SK-N-SH (cell line): ENCODE measurements at regions of chr10 and their contacts with region 1.

Region 1: GRCh38 chr10:70363971-70364771 is 18.3 kb downstream of the LRRC20 start:
- DNase-seq: peak; percentile 88
- H3K4me3 ChIP-seq: peak overlapping the region in 1 of 2 experiments; percentile 14; a peak in 1 of 4 replicates
- H3K27ac ChIP-seq: peak overlapping the region; percentile 60 to 96
- H3K4me1 ChIP-seq: peaks cover 6 to 15% of the 10 kb centered on the region in 2 experiments; a peak in 3 of 4 replicates
- H3K27me3 ChIP-seq: no peaks in the 10 kb centered on the region
- CTCF ChIP-seq: peak; percentile 92
- EP300 ChIP-seq: peak; percentile 6 to 77; a peak in 2 of 4 replicates
- RAD21 ChIP-seq: peak; percentile 99

Region 2: GRCh38 chr10:69668721-69669120 is 695.5 kb before region 1 on chr10:
- CTCF ChIA-PET with region 1: no interaction called
- POLR2A ChIA-PET with region 1: no interaction called
- DNase-seq: no peak
- H3K4me3 ChIP-seq: no peak overlapping the region
- H3K27ac ChIP-seq: no peak overlapping the region
- H3K4me1 ChIP-seq: no peaks in the 10 kb centered on the region; a peak in 1 of 4 replicates
- H3K27me3 ChIP-seq: peaks cover 30% of the 10 kb centered on the region
- CTCF ChIP-seq: no peak
- EP300 ChIP-seq: no peak
- RAD21 ChIP-seq: no peak

Region 3: DNA sequence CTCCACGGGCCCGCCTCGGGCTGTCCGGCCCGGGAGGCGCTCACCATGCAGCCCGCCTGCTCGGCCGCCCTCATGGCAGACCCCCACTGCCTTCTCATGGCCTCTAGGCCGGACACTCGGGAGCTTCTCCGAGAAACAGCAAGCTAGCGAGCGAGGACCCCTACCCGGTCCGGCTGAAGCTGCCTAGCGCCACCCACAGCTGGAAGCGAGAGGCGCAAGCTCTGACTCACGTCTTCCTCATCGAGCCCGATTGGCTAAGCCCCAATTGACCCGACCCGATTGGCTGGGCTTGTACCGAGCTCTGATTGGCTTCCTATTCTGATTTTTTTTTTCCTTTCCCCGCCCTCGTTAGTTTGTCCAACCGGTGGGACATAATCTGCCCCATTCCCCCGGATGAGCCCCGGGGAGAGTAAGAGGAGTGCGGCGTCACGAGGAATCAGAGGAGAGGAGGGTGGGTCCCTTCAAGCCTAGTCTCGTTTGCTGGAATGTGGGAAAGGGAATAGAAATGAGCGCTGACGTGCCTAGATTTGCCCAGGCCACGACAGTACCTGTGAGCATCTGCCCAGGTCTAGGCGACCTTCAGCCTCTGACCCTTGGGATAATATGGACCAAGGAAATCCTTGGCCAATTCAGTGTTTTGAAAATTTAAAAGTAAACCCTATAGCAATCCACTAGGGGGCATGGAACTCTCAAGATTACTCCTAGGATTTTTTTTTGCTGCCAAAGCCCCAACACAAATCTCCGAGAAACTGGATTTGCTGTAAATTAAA is 217.5 kb before region 1 on chr10 and contains the start of gene TYSND1:
- CTCF ChIA-PET with region 1: interaction called, 28 read pairs
- POLR2A ChIA-PET with region 1: interaction called, 6 read pairs
- DNase-seq: peak; percentile 96
- H3K4me3 ChIP-seq: peak within 1 kb of the TSS; percentile 68 to 71
- H3K27ac ChIP-seq: peak within 1 kb of the TSS; percentile 91 to 92
- H3K4me1 ChIP-seq: peaks cover 5 to 27% of the 10 kb centered on the region in 2 experiments; a peak in 3 of 4 replicates
- H3K27me3 ChIP-seq: no peaks in the 10 kb centered on the region
- CTCF ChIP-seq: peak; percentile 60
- EP300 ChIP-seq: no peak; a peak in 1 of 4 replicates
- RAD21 ChIP-seq: peak; percentile 73
- polyA plus RNA-seq, gene TYSND1: 7.2 and 7.4 TPM in 2 replicates

Region 4: GRCh38 chr10:70227548-70228320 is 136.4 kb before region 1 on chr10:
- CTCF ChIA-PET with region 1: interaction called, 214 read pairs
- POLR2A ChIA-PET with region 1: interaction called, 26 read pairs
- DNase-seq: no peak
- H3K4me3 ChIP-seq: no peak overlapping the region
- H3K27ac ChIP-seq: no peak overlapping the region
- H3K4me1 ChIP-seq: peaks cover 0 to 4% of the 10 kb centered on the region in 2 experiments; a peak in 2 of 4 replicates
- H3K27me3 ChIP-seq: no peaks in the 10 kb centered on the region
- CTCF ChIP-seq: no peak
- EP300 ChIP-seq: no peak
- RAD21 ChIP-seq: no peak

Region 5: GRCh38 chr10:70272925-70273316 is 91.2 kb before region 1 on chr10:
- CTCF ChIA-PET with region 1: interaction called, 32 read pairs
- POLR2A ChIA-PET with region 1: interaction called, 5 read pairs
- DNase-seq: peak; percentile 49
- H3K4me3 ChIP-seq: peak overlapping the region in 1 of 2 experiments; percentile 21; a peak in 1 of 4 replicates
- H3K27ac ChIP-seq: no peak overlapping the region
- H3K4me1 ChIP-seq: peaks cover 0 to 2% of the 10 kb centered on the region in 2 experiments; a peak in 1 of 4 replicates
- H3K27me3 ChIP-seq: no peaks in the 10 kb centered on the region
- CTCF ChIP-seq: peak; percentile 64
- EP300 ChIP-seq: no peak
- RAD21 ChIP-seq: peak; percentile 55

Region 6: DNA sequence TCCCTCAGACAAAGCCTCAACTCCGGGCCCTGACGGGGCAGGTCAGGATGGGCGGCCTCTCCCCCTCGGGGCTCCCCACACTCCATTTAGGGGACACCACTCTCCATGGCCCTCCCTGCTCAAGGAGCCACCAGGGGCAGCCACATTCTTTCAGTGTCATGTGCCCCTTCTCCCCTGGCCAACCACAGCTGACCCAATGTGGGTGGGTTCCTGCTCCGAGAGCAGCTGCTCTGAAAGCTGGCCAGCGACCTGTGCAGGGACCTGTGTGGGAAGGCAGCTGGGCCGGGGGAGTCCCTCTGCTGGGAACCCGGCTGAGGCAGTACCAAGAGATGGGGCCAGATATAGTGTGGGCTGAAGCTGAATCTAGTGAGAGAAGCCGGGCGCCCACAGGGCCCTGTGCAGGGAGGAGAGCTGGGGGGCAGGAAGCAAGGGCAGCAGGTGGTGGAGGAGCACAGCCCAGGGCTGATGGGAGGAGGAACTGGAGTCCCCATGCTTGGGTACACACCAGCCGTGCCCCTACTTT is 39.8 kb before region 1 on chr10:
- CTCF ChIA-PET with region 1: interaction called, 10 read pairs
- POLR2A ChIA-PET with region 1: no interaction called
- DNase-seq: no peak
- H3K4me3 ChIP-seq: no peak overlapping the region
- H3K27ac ChIP-seq: no peak overlapping the region; a peak in 1 of 4 replicates
- H3K4me1 ChIP-seq: peaks cover 20 to 22% of the 10 kb centered on the region in 2 experiments; a peak in 2 of 4 replicates
- H3K27me3 ChIP-seq: no peaks in the 10 kb centered on the region
- CTCF ChIP-seq: no peak
- EP300 ChIP-seq: no peak
- RAD21 ChIP-seq: no peak

Region 7: DNA sequence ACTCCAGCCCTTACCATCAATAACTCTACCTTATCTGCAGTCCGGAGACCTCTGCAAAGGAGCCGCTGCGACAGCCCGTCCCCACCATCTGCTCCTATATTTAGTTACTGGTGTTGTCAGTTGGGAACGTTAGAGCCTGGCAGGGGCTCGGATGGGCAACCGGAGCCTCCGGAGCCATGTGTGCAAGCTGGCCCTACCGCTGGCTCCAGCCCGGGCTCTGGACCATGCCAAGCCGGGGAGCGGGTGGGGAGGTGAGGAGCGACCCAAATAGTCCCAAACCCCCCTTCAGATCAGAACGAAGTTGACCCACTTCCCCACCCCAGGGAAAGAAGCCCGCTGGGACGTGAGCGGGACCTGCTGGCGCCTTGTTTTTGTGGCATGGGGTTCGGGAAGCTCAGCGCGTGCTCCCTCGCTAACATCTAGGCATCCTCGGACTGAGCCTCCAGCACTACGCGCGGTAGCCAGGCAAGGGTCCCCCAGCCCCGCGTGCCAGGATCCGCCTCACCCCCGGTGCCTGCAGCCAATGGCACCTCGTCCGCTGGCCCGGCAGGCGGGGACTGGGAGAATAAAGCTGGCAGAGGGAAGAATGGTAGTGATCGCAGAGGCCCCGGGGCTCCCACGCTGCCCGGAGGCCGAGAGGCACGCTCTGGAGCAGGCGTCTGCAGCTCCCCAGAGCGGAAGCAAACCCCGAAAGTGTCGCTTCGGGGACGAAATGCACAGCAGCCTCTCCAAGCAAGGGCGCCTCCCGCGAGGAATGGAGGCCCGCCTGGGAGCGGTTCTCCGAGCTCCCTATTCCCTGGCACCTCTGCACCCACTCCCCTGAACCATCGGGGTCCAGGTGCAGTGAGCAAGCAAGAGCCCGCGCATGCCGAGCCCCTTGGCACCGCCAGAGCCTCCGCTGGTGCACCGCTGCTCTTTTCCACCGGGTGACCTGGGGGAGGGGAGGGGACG is 17.6 kb after region 1 on chr10:
- CTCF ChIA-PET with region 1: interaction called, 45 read pairs
- POLR2A ChIA-PET with region 1: interaction called, 10 read pairs
- DNase-seq: peak; percentile 92
- H3K4me3 ChIP-seq: peak overlapping the region; percentile 89 to 96
- H3K27ac ChIP-seq: peak overlapping the region; percentile 38 to 89
- H3K4me1 ChIP-seq: peaks cover 11 to 20% of the 10 kb centered on the region in 2 experiments; a peak in 3 of 4 replicates
- H3K27me3 ChIP-seq: no peaks in the 10 kb centered on the region
- CTCF ChIP-seq: 0 out of 2 replicates have a peak, but pooled peaks have one; percentile 31
- EP300 ChIP-seq: no peak
- RAD21 ChIP-seq: no peak

Region 8: DNA sequence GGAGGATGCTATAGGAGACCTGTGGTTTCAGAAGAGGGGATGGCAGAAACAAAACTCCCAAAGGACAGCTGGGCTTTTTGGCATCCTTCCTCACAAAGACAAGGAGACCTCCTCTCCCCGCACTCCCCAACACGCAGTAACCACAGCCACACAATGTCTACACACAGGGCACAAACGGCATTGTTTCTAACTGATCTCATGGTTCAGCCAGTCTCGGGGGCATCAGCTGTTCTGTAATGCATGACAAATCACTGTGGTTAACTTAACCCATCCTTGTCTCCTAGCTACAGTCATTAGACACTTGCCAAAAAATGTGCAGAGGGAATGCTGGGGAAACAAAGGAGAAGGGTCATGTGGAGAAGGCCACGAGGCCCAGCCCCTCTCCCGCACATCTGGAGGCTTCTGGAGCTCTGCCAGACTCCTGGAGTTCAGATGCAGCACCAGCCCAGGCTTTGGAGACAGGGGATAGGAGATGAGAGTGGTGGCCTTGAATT is 300.6 kb after region 1 on chr10:
- CTCF ChIA-PET with region 1: no interaction called
- POLR2A ChIA-PET with region 1: no interaction called
- DNase-seq: peak; percentile 78
- H3K4me3 ChIP-seq: no peak overlapping the region
- H3K27ac ChIP-seq: peak overlapping the region; percentile 68 to 93
- H3K4me1 ChIP-seq: peaks cover 15% of the 10 kb centered on the region in 2 experiments
- H3K27me3 ChIP-seq: no peaks in the 10 kb centered on the region
- CTCF ChIP-seq: no peak
- EP300 ChIP-seq: peak; percentile 42 to 93; a peak in 3 of 4 replicates
- RAD21 ChIP-seq: no peak